ENCODE measurements at regions of chr4 and their contacts with region 1.

Region 1: GRCh38 chr4:1249148-1249730 is 309 bp upstream of the CTBP1 start:
- DNase-seq: no peak
- H3K4me3 ChIP-seq: peak overlapping the region; percentile 58
- H3K27ac ChIP-seq: peak overlapping the region; percentile 77
- H3K27me3 ChIP-seq: no peaks in the 10 kb centered on the region
- CTCF ChIP-seq: no peak

Region 2: DNA sequence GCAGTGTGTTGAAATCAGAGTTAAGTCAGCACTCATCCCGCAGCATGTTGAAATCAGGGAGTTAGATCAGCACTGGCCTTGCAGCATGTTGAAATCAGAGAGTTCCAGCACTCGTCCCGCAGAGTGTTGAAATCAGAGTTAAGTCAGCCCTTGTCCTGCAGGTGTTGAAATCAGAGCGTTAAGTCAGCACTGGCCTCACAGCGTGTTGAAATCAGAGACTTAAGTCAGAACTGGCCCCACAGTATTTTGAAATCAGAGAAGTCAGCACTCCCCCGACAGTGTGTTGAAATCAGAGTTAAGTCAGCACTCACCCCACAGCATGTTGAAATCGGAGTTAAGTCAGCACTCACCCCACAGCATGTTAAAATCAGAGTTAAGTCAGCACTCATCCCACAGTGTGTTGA is 86.9 kb after region 1 on chr4:
- CTCF ChIA-PET with region 1: no interaction called
- POLR2A ChIA-PET with region 1: no interaction called
- DNase-seq: no peak
- H3K4me3 ChIP-seq: no peak overlapping the region
- H3K27ac ChIP-seq: no peak overlapping the region
- H3K27me3 ChIP-seq: no peaks in the 10 kb centered on the region
- CTCF ChIP-seq: no peak

Region 3: GRCh38 chr4:1346781-1347409 is 97.7 kb after region 1 on chr4 and contains the start of gene UVSSA:
- CTCF ChIA-PET with region 1: no interaction called
- POLR2A ChIA-PET with region 1: interaction called, 33 read pairs
- DNase-seq: peak; percentile 99
- H3K4me3 ChIP-seq: peak within 1 kb of the TSS; percentile 71
- H3K27ac ChIP-seq: peak within 1 kb of the TSS; percentile 93
- H3K27me3 ChIP-seq: no peaks in the 10 kb centered on the region
- CTCF ChIP-seq: no peak
- polyA plus RNA-seq, gene UVSSA: 4.9 and 5.2 TPM in 2 replicates

Measured in AG04450 (cell line).